Ovary (tissue), 10 donors: ENCODE measurements at regions of chr18 and their contacts with region 1.

Region 1: GRCh38 chr18:8018701-8019331 is 451.7 kb downstream of the PTPRM start:
- DNase-seq: no peak
- H3K4me3 ChIP-seq: no peak overlapping the region
- H3K27ac ChIP-seq: no peak overlapping the region
- H3K4me1 ChIP-seq: peaks cover 1% of the 10 kb centered on the region
- H3K27me3 ChIP-seq: no peaks in the 10 kb centered on the region
- CTCF ChIP-seq: no peak
- EP300 ChIP-seq: no peak
- POLR2A ChIP-seq: no peak

Region 2: GRCh38 chr18:7755753-7756475 is 262.9 kb before region 1 on chr18:
- intact Hi-C with region 1: no loop called
- DNase-seq: no peak
- H3K4me3 ChIP-seq: no peak overlapping the region
- H3K27ac ChIP-seq: no peak overlapping the region
- H3K4me1 ChIP-seq: peaks cover 6% of the 10 kb centered on the region
- H3K27me3 ChIP-seq: no peaks in the 10 kb centered on the region
- CTCF ChIP-seq: no peak
- EP300 ChIP-seq: no peak
- POLR2A ChIP-seq: no peak

Region 3: DNA sequence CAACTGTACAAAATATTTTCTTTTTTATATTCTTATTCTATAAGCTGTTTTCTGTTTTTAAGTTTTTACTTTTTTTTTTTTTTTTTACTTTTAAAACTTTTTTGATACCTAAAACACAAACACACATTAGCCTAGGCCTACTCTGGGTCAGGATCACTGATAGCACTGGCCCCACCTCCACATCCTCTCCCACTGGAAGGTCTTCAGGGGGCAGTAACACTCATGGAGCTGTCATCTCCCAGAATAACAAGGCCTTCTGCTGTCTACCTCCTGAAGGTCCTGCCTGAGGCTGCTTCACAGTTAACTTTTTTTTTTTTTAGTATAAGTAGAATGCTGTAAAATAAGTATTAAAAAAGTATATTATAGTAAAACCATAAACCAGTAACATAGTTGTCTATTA is 36.6 kb before region 1 on chr18:
- intact Hi-C with region 1: loop called in 1 of 4 experiments (anchors 2 kb)
- DNase-seq: no peak
- H3K4me3 ChIP-seq: no peak overlapping the region
- H3K27ac ChIP-seq: no peak overlapping the region
- H3K4me1 ChIP-seq: no peaks in the 10 kb centered on the region
- H3K27me3 ChIP-seq: no peaks in the 10 kb centered on the region
- CTCF ChIP-seq: no peak
- EP300 ChIP-seq: no peak
- POLR2A ChIP-seq: no peak

Region 4: DNA sequence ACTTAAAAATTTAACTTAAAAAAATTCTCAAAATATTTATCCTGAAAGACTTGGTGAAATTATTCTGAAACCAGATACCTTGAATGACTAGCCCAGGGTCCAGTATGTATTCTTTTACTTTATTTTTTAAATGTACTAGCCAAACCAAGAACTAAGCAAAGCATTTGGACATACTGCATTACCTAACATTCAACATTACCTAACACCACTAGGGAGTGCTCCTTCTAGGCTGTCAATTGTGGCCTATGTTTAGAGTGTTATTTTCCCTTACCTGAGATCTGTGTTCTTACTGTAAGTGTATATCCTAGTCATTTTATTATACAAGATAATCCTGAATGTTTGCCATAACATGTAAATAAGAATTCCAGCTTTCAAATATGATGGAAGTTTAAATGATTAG is 44.9 kb after region 1 on chr18:
- intact Hi-C with region 1: no loop called
- DNase-seq: no peak
- H3K4me3 ChIP-seq: no peak overlapping the region
- H3K27ac ChIP-seq: no peak overlapping the region
- H3K4me1 ChIP-seq: no peaks in the 10 kb centered on the region
- H3K27me3 ChIP-seq: no peaks in the 10 kb centered on the region
- CTCF ChIP-seq: no peak
- EP300 ChIP-seq: no peak
- POLR2A ChIP-seq: no peak